Right cardiac atrium (tissue), 5 donors: ENCODE measurements at regions of chr12 and their contacts with region 1.

Region 1: GRCh38 chr12:53352331-53353256 is 16.4 kb upstream of the SP7 start:
- DNase-seq: peak; percentile 75 to 85 (median 83)
- ATAC-seq: peak; percentile 94 to 95
- H3K4me3 ChIP-seq: no peak overlapping the region
- H3K27ac ChIP-seq: no peak overlapping the region
- H3K4me1 ChIP-seq: no peaks in the 10 kb centered on the region
- H3K27me3 ChIP-seq: no peaks in the 10 kb centered on the region

Region 2: GRCh38 chr12:53419761-53420160 is 67.2 kb after region 1 on chr12:
- intact Hi-C with region 1: loop called (anchors 1 to 2 kb)
- DNase-seq: no peak
- ATAC-seq: no peak
- H3K4me3 ChIP-seq: no peak overlapping the region
- H3K27ac ChIP-seq: no peak overlapping the region
- H3K4me1 ChIP-seq: peaks cover 7% of the 10 kb centered on the region
- H3K27me3 ChIP-seq: no peaks in the 10 kb centered on the region

Region 3: GRCh38 chr12:53424626-53425514 is 72.3 kb after region 1 on chr12:
- intact Hi-C with region 1: loop called (anchors 1 to 2 kb)
- DNase-seq: no peak
- ATAC-seq: peak; percentile 38 to 55
- H3K4me3 ChIP-seq: no peak overlapping the region
- H3K27ac ChIP-seq: no peak overlapping the region
- H3K4me1 ChIP-seq: peaks cover 3% of the 10 kb centered on the region
- H3K27me3 ChIP-seq: no peaks in the 10 kb centered on the region

Region 4: GRCh38 chr12:53508534-53509199 is 156.1 kb after region 1 on chr12:
- intact Hi-C with region 1: loop called in 3 of 4 experiments (anchors 5 kb)
- DNase-seq: peak; percentile 76 to 93 (median 92)
- ATAC-seq: peak; percentile 78 to 84
- H3K4me3 ChIP-seq: no peak overlapping the region
- H3K27ac ChIP-seq: no peak overlapping the region
- H3K4me1 ChIP-seq: no peaks in the 10 kb centered on the region
- H3K27me3 ChIP-seq: no peaks in the 10 kb centered on the region

Region 5: DNA sequence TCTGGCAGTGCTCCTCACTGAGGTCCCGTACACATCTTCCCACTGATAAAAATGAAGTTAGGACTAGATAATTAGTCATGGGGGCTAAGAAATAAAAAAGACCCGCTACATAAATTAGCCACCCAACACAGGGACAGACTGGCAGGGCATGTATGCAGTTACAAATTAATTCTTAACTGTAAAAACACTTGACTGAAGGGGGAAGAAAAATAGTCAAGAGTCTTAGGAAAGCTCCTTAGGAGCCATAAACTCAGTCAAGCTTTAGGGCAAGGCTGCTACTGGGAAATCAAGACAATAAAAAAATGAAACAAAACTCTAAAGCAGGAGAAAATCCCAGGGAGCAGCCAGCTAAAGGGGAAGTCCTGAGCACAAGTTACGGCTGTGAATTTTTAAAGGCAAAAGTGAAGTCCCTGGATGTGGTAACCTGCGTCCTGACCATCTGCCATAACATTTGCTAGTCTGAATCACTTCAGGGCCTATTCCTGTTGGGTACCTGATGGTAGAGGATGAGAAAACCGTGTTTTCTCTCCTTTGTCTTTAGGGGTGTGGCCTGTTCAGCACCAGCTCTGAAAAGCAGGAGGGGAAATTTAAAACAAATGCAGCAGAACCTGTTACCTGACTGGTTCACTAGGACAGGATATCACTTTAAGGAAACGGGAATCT is 162.2 kb after region 1 on chr12:
- intact Hi-C with region 1: loop called in 3 of 4 experiments (anchors 5 kb)
- DNase-seq: no peak
- ATAC-seq: no peak
- H3K4me3 ChIP-seq: no peak overlapping the region
- H3K27ac ChIP-seq: no peak overlapping the region
- H3K4me1 ChIP-seq: no peaks in the 10 kb centered on the region
- H3K27me3 ChIP-seq: no peaks in the 10 kb centered on the region

Region 6: GRCh38 chr12:53561590-53561953 is 209.0 kb after region 1 on chr12:
- intact Hi-C with region 1: no loop called
- DNase-seq: no peak
- ATAC-seq: peak in 1 of 2 donors; percentile 65
- H3K4me3 ChIP-seq: no peak overlapping the region
- H3K27ac ChIP-seq: no peak overlapping the region
- H3K4me1 ChIP-seq: peaks cover 2% of the 10 kb centered on the region
- H3K27me3 ChIP-seq: no peaks in the 10 kb centered on the region

Region 7: GRCh38 chr12:53625946-53626701 is 273.5 kb after region 1 on chr12 and contains the start of gene ATF7:
- intact Hi-C with region 1: no loop called
- DNase-seq: peak; percentile 97 to 99 (median 99)
- ATAC-seq: peak; percentile 99
- H3K4me3 ChIP-seq: peak within 1 kb of the TSS; percentile 63
- H3K27ac ChIP-seq: peak within 1 kb of the TSS; percentile 96
- H3K4me1 ChIP-seq: peaks cover 3% of the 10 kb centered on the region
- H3K27me3 ChIP-seq: no peaks in the 10 kb centered on the region
- total RNA-seq, gene ATF7: 30.7 to 36.9 (median 33.3) TPM

Region 8: GRCh38 chr12:53727310-53728041 is 374.9 kb after region 1 on chr12 and contains the start of gene CALCOCO1:
- intact Hi-C with region 1: no loop called
- DNase-seq: peak; percentile 98 to 99 (median 98)
- ATAC-seq: peak; percentile 99 to 100
- H3K4me3 ChIP-seq: peak within 1 kb of the TSS; percentile 89
- H3K27ac ChIP-seq: peak within 1 kb of the TSS; percentile 96
- H3K4me1 ChIP-seq: no peaks in the 10 kb centered on the region
- H3K27me3 ChIP-seq: no peaks in the 10 kb centered on the region
- total RNA-seq, gene CALCOCO1: 189 to 247 (median 207) TPM